Right cardiac atrium (tissue), 5 donors: ENCODE measurements at regions of chr19 and their contacts with region 1.

Region 1: GRCh38 chr19:1279782-1280341 is 4.5 kb downstream of the FAM174C start:
- DNase-seq: peak; percentile 80 to 94 (median 94)
- ATAC-seq: peak; percentile 17 to 24
- H3K4me3 ChIP-seq: no peak overlapping the region
- H3K27ac ChIP-seq: no peak overlapping the region
- H3K4me1 ChIP-seq: peaks cover 1% of the 10 kb centered on the region
- H3K27me3 ChIP-seq: no peaks in the 10 kb centered on the region

Region 2: DNA sequence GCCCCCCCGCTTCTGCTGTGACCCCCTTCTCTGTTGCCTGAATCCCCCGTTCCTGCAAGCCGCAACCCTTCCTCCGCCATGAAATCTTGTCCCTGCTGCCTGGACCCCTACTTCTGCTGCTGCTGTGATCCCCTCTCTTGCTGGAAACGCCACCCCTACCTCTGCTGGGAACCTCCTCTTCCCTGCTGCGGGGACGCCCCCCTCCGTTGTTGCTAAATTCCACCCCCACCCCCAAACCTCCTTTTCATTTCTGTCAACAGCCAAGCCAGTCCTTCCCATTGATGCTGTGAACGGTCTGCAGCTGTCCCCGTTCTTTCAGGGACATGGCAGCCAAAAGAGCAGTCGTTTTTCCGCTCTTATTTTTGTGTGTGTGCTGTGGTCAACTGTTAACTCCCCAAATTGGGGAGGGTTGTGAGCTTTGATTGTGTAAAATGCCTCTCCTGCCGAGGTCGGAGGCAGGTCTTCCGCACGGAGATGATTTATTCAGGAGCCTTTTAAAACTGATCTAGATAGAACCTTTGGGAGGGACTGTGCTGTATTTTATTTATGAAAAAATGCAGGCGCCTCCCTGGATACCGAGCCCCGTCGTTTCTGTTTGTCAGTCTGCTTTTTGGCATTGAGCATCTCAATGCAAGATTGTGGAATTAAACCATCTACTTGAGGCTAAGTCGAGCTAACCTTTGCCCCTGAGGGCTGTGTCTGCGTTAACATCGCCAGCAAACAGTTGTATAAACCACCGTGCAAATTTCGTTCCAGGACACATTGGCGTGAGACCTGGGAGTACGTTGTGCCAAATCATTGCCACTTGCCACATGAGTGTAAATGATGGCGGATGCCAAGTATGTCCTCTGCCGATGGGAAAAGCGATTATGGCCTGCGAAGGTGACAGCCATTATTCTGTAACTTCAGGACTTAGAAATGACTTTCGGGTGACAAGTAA is 76.0 kb after region 1 on chr19:
- intact Hi-C with region 1: loop called in 2 of 4 experiments (anchors 10 kb)
- DNase-seq: peak in 2 of 3 donors; percentile 52 to 69
- ATAC-seq: no peak
- H3K4me3 ChIP-seq: peak overlapping the region; percentile 96
- H3K27ac ChIP-seq: peak overlapping the region; percentile 93
- H3K4me1 ChIP-seq: peaks cover 6% of the 10 kb centered on the region
- H3K27me3 ChIP-seq: no peaks in the 10 kb centered on the region

Region 3: GRCh38 chr19:1373534-1374249 is 93.8 kb after region 1 on chr19:
- intact Hi-C with region 1: loop called in 1 of 4 experiments (anchors 10 kb)
- DNase-seq: peak; percentile 77 to 91 (median 91)
- ATAC-seq: peak; percentile 60 to 68
- H3K4me3 ChIP-seq: no peak overlapping the region
- H3K27ac ChIP-seq: peak overlapping the region; percentile 54
- H3K4me1 ChIP-seq: no peaks in the 10 kb centered on the region
- H3K27me3 ChIP-seq: no peaks in the 10 kb centered on the region

Region 4: GRCh38 chr19:1383311-1384084 is 103.6 kb after region 1 on chr19 and contains the start of gene NDUFS7:
- intact Hi-C with region 1: loop called in 2 of 4 experiments (anchors 5 to 10 kb)
- DNase-seq: peak; percentile 90 to 95 (median 95)
- ATAC-seq: peak; percentile 87 to 88
- H3K4me3 ChIP-seq: peak within 1 kb of the TSS; percentile 49
- H3K27ac ChIP-seq: peak within 1 kb of the TSS; percentile 77
- H3K4me1 ChIP-seq: no peaks in the 10 kb centered on the region
- H3K27me3 ChIP-seq: no peaks in the 10 kb centered on the region
- total RNA-seq, gene NDUFS7: 209 to 294 (median 259) TPM